IMR-90 (cell line): ENCODE measurements at regions of chr11 and their contacts with region 1.

Region 1: GRCh38 chr11:130403271-130403804 is 25.1 kb downstream of the ADAMTS8 start:
- DNase-seq: peak; percentile 97
- ATAC-seq: peak; percentile 89
- H3K4me3 ChIP-seq: peak overlapping the region; percentile 4; the same call in 1 of the 2 replicates
- H3K27ac ChIP-seq: peak overlapping the region; percentile 96
- H3K4me1 ChIP-seq: peaks cover 34% of the 10 kb centered on the region
- H3K27me3 ChIP-seq: no peaks in the 10 kb centered on the region
- CTCF ChIP-seq: no peak
- POLR2A ChIP-seq: no peak
- RAD21 ChIP-seq: no peak

Region 2: DNA sequence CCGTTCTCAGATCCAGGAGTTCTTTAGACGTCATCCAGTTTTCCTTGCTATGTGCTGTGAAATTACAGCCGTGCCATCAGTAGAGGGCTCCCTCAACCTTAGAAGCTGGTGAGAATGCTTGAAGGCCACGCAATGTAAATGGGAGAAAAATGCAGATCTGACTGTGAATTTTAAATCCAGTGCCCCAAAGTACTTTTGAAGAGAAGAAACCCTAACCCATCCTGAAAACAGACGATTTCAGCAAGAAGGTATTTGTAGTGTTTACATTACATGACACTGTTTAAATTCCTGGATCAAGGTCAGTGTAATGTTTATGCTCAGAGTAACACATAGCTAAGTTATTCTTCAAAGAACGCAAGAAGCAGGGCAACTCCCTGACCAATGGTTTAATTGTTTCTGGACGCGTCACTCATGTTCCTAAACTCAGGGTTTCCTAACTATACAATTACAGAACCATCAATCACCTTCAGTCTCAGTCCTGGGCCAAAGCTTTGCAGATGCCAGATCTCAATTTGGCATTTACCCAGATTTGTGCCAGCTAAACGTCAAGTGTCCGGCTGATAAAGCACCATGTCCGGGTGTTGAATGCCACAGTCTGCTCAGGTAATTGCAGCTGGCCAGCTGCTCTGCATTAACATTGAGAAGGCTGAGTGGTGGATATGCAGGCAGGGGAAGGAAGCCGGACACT is 13.1 kb before region 1 on chr11:
- CTCF ChIA-PET with region 1: interaction called, 5 read pairs
- POLR2A ChIA-PET with region 1: interaction called, 3 read pairs
- dilution Hi-C with region 1: no loop called
- in situ Hi-C with region 1: no loop called
- intact Hi-C with region 1: loop called (anchors 1 kb)
- DNase-seq: peak; percentile 99
- ATAC-seq: peak; percentile 88
- H3K4me3 ChIP-seq: no peak overlapping the region
- H3K27ac ChIP-seq: peak overlapping the region; percentile 68; the same call in 1 of the 2 replicates
- H3K4me1 ChIP-seq: peaks cover 12% of the 10 kb centered on the region
- H3K27me3 ChIP-seq: peaks cover 32% of the 10 kb centered on the region
- CTCF ChIP-seq: peak; percentile 89
- POLR2A ChIP-seq: 0 out of 2 replicates have a peak, but pooled peaks have one; percentile 29
- RAD21 ChIP-seq: peak; percentile 86

Region 3: GRCh38 chr11:130644187-130644586 is 240.8 kb after region 1 on chr11:
- CTCF ChIA-PET with region 1: no interaction called
- POLR2A ChIA-PET with region 1: no interaction called
- dilution Hi-C with region 1: no loop called
- in situ Hi-C with region 1: no loop called
- intact Hi-C with region 1: no loop called
- DNase-seq: no peak
- ATAC-seq: no peak
- H3K4me3 ChIP-seq: no peak overlapping the region
- H3K27ac ChIP-seq: no peak overlapping the region
- H3K4me1 ChIP-seq: peaks cover 16% of the 10 kb centered on the region; the same call in 1 of the 2 replicates
- H3K27me3 ChIP-seq: no peaks in the 10 kb centered on the region
- CTCF ChIP-seq: no peak
- POLR2A ChIP-seq: no peak
- RAD21 ChIP-seq: no peak

Region 4: GRCh38 chr11:131889146-131889577 is 1485.8 kb after region 1 on chr11:
- CTCF ChIA-PET with region 1: no interaction called
- POLR2A ChIA-PET with region 1: no interaction called
- dilution Hi-C with region 1: no loop called
- in situ Hi-C with region 1: loop called (anchors 25 kb)
- intact Hi-C with region 1: no loop called
- DNase-seq: peak; percentile 95
- ATAC-seq: peak; percentile 60
- H3K4me3 ChIP-seq: no peak overlapping the region
- H3K27ac ChIP-seq: peak overlapping the region; percentile 68
- H3K4me1 ChIP-seq: peaks cover 19% of the 10 kb centered on the region
- H3K27me3 ChIP-seq: no peaks in the 10 kb centered on the region
- CTCF ChIP-seq: no peak
- POLR2A ChIP-seq: no peak
- RAD21 ChIP-seq: no peak

Region 5: GRCh38 chr11:132064987-132065620 is 1661.8 kb after region 1 on chr11:
- CTCF ChIA-PET with region 1: no interaction called
- POLR2A ChIA-PET with region 1: no interaction called
- dilution Hi-C with region 1: no loop called
- in situ Hi-C with region 1: loop called (anchors 25 kb)
- intact Hi-C with region 1: no loop called
- DNase-seq: peak; percentile 99
- ATAC-seq: peak; percentile 80
- H3K4me3 ChIP-seq: no peak overlapping the region
- H3K27ac ChIP-seq: peak overlapping the region; percentile 27; the same call in 1 of the 2 replicates
- H3K4me1 ChIP-seq: peaks cover 26% of the 10 kb centered on the region
- H3K27me3 ChIP-seq: no peaks in the 10 kb centered on the region
- CTCF ChIP-seq: no peak
- POLR2A ChIP-seq: peak; percentile 68
- RAD21 ChIP-seq: peak; percentile 24; the same call in 1 of the 2 replicates